Posterior cingulate gyrus (tissue), 11 donors: ENCODE measurements at regions of chr6 and their contacts with region 1.

Region 1: GRCh38 chr6:125974214-125974866 is 12.0 kb upstream of the TRMT11 start:
- DNase-seq: no peak

Region 2: DNA sequence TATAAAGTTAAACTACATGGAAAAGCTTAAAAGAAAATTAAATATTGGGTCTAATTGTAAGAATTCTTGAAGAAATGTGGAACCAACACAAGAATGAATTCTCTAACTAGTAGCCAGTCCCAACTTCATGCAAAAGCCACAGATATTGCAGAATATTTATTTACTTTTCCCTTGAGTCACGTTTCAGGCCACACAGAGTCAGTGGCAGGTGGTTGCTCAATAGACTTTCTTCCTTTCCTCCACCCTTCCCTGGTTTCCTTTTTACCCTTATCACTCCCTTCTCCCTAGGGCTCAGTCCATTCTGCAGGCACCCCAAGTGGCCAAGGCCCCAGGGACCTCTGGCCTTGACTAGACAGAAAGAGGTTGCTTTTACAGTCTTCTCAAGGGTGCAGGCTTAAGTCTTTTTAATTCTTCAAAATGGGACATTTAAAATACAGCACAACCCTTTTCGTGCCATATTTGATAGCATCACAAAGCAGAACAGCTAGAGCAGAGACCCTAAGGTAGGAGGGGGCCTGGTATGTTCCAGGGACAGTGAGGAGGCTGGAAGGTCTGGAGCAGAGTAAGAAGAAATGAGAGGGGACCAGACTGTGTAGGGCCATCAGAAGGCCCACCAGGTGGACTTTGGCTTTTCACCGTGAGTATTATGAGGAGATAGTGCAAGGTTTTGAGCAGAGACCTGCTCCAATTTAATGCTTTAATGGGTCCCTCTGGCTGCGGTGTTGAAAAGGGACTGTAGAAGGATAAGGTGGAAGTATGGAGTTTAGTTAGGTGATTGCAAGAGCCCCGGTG is 737.6 kb before region 1 on chr6:
- intact Hi-C with region 1: no loop called
- DNase-seq: no peak

Region 3: GRCh38 chr6:125779924-125780539 is 194.3 kb before region 1 on chr6:
- intact Hi-C with region 1: loop called (anchors 2 kb)
- DNase-seq: peak; percentile 74 to 98 (median 82)

Region 4: DNA sequence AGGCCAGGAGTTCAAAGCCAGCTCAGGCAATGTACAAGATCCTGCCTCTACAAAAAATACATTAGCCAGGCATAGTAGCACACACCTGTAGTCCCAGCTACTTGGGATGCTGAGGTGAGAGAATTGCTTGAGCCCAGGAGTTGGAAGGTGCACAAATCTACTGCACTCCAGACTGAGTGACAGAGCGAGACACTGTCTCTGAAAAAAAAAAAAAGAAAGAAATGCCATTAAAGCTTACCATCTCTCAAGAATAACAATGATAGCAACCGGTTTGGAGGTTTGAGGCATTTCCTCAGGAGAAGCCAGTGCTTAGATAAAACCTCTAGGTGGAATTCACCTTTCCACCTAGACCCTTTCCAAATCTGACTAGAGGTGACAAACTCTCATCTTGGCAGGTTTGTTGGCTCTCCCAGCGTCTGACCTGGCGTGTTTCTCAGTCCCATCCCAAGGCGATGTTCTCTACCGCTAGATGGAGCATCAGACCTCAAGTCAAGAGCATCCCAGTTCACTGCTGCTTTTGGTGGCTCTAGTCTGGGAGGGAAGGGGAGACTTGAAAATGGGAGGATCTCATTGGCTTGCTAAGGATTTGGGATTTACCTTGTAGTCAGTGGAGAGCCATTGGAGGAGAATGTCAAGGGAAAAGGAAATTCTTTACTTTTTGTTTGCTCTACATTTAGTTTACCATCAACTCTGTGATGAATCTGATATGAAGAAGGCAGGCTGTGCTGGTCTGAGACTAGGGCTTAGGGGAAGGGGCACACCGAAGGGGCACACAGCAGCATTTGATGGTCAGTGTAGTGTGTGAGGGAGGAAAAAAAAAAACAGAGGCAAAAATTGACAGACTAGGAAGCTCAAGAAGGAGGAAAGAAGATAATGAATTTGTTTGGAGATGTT is 115.7 kb before region 1 on chr6:
- intact Hi-C with region 1: loop called (anchors 1 kb)
- DNase-seq: peak in 7 of 10 donors; percentile 30 to 92 (median 63)

Region 5: DNA sequence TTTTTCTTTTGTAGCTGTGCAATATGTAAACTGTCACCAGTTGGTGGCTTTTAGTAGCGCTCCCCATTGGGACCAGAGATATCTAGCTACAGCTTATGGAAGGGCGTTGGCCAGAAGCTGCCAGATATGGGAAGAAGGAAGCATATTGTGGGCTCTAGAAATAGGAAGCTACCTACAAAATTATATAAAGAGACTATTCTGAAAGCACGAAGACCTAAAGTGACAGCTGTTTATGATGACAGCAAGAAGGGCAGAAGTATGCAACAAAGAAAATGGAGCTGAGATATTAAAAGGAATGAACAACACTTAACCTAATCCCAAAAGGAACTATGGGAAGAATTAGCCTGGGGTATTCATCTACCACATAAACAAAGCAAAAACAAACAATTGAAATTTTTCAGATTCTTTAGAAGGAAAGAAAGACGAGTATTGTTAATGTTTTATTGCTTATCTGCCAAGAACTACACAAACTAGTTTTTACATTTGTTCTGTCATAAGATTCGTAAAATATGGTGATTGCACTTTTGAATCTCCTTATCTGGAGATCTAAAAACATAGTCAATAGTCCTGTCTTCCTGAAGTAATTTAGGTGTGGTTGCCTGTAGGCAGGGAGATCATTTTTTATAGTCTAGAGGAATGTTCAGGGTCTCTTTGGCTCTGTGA is 102.0 kb before region 1 on chr6:
- intact Hi-C with region 1: no loop called
- DNase-seq: no peak